ENCODE measurements at regions of chr1 and their contacts with region 1.

Region 1: DNA sequence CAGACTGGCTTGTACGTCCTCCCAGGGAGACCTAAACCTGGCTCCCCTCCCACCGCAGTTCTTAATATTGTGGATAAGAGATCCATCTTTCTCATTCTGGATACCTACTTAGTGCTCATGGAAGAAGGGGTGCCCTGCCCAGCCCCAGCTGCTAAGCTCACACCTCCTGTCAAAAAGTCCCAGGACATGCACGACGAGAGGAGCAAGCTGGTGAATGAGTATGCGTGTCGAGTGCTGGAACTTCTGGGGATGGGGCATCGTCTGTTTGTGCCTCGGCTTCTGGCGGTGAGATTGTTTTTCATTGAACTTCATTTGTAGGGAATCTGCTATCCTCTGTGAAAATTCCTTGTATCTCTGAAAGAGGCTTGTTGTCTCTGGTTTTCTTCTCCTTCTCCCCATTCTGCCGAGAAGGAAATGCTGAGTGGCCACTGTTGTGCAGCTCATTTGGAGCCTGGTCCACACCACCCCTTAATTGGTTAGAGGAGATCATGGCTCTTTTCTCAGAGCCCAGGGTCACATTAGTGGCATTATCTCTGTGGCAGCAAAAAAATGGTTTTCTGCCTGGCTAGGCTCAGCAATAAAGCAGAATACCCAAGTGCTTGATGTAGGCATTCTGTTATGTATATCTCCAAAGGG is 199.4 kb upstream of the CACYBP start:
- DNase-seq: no peak
- H3K4me3 ChIP-seq: peak overlapping the region; percentile 46 to 59 (median 50); a peak in 7 of 8 replicates
- H3K27ac ChIP-seq: no peak overlapping the region
- H3K4me1 ChIP-seq: peaks cover 4 to 11% (median 8%) of the 10 kb centered on the region in 4 experiments
- H3K27me3 ChIP-seq: no peaks in the 10 kb centered on the region
- CTCF ChIP-seq: no peak
- EP300 ChIP-seq: no peak
- POLR2A ChIP-seq: no peak
- RAD21 ChIP-seq: no peak

Region 2: DNA sequence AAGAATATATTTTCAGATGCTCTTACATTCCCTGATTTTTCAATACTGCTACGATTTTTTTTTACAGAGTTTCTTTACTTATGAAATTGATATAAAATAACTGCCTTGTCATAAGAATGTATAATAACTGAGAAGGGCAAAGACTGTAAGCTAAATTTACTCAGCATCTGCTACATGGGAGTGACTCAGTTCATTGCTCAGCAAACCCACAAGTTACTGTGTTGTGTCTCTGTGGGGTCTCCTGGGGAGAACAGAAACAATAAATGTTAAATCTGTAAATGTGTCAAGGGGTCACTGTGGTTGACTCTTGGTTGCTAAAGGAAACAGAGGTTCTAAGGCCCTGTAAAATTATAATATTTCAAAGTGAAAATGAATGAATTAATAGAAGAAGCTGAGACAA is 10.9 kb before region 1 on chr1:
- CTCF ChIA-PET with region 1: interaction called, 4 read pairs
- POLR2A ChIA-PET with region 1: interaction called, 17 read pairs
- DNase-seq: no peak
- H3K4me3 ChIP-seq: no peak overlapping the region
- H3K27ac ChIP-seq: no peak overlapping the region
- H3K4me1 ChIP-seq: peaks cover 0 to 2% (median 0%) of the 10 kb centered on the region in 4 experiments; a peak in 2 of 7 replicates
- H3K27me3 ChIP-seq: no peaks in the 10 kb centered on the region
- CTCF ChIP-seq: no peak
- EP300 ChIP-seq: no peak
- POLR2A ChIP-seq: no peak
- RAD21 ChIP-seq: no peak

Region 3: DNA sequence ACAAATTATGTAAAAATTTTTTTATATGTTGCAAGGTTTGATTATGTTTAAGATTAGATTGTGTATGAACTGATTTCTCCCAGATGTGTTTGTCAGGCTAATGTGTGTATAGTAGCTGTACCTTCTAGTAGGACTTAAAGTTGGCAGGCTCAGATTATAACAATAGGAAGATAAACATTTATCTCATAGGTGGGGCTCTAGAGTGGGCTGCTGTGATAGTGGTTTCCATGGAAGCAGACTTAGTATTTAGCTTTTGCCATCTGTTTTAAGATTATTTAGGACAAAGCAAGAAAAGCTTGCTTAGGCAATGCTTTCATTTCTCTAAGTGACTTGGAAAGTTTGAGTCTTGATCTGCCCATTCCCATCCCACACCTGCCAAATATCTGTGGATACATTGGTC is 11.7 kb after region 1 on chr1:
- CTCF ChIA-PET with region 1: interaction called, 9 read pairs
- POLR2A ChIA-PET with region 1: interaction called, 11 read pairs
- DNase-seq: no peak
- H3K4me3 ChIP-seq: no peak overlapping the region
- H3K27ac ChIP-seq: no peak overlapping the region
- H3K4me1 ChIP-seq: peaks cover 0 to 9% (median 5%) of the 10 kb centered on the region in 4 experiments; a peak in 3 of 7 replicates
- H3K27me3 ChIP-seq: no peaks in the 10 kb centered on the region
- CTCF ChIP-seq: no peak
- EP300 ChIP-seq: no peak
- POLR2A ChIP-seq: no peak
- RAD21 ChIP-seq: no peak

Region 4: GRCh38 chr1:174841747-174842146 is 41.4 kb after region 1 on chr1:
- CTCF ChIA-PET with region 1: no interaction called
- POLR2A ChIA-PET with region 1: no interaction called
- DNase-seq: no peak
- H3K4me3 ChIP-seq: no peak overlapping the region
- H3K27ac ChIP-seq: no peak overlapping the region
- H3K4me1 ChIP-seq: no peaks in the 10 kb centered on the region
- H3K27me3 ChIP-seq: no peaks in the 10 kb centered on the region
- CTCF ChIP-seq: no peak
- EP300 ChIP-seq: no peak
- POLR2A ChIP-seq: no peak
- RAD21 ChIP-seq: no peak

Region 5: DNA sequence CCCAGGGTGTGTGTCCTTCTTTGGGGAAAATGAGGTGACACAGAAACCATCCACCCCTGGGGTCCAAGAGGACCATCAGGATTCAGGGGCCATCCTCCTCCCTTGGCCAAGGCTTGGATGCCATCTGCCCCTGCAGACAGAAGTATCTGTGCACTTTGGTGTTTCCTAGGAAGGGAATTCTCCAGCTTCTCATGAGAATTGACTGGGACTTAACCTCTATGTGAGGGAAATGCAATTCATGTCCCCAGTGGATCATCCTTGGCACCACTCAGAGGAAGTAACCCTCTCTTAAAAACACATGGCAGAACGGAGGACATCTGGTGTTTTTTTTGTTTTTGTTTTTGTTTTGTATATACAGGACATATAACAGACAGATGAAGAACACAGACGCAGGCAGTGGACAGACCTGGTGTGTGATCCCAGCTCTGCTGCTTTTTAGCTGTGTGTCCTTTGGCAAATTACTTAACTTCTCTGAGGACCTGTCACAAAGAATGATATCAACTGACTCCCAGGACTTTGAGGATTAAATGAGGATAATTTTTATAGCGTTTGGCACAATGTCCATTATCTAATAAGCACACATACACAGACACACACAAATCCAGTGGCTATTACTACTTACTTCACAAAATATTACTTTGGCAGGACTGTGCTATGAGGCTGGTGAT is 271.1 kb after region 1 on chr1:
- CTCF ChIA-PET with region 1: no interaction called
- POLR2A ChIA-PET with region 1: no interaction called
- DNase-seq: no peak
- H3K4me3 ChIP-seq: no peak overlapping the region
- H3K27ac ChIP-seq: no peak overlapping the region
- H3K4me1 ChIP-seq: peaks cover 6 to 18% (median 11%) of the 10 kb centered on the region in 4 experiments
- H3K27me3 ChIP-seq: no peaks in the 10 kb centered on the region
- CTCF ChIP-seq: no peak
- EP300 ChIP-seq: no peak
- POLR2A ChIP-seq: no peak
- RAD21 ChIP-seq: no peak

Measured in H1 (cell line).